ENCODE measurements at regions of chr13 and their contacts with region 1.

Region 1: DNA sequence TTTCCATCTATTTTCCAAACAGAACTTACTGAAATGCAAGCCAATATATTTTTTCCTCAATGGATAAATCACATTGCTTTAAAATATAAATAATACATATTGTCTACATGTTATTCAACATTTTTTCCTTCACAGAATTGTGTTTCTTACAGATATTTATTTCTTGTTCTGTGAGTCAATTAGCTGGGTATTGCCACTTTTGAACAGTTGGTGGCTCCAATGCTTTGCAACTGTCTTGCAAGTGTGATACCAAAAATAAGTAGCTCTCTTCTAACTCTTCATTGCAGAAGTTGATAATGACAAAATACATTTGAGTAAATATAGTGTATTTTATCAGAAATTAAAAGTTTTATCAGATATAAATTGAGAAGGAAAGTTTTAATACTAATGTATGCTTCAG is 17.1 kb upstream of the GPC5 start:
- DNase-seq: peak in 3 of 10 donors; percentile 4 to 30 (median 30)
- H3K4me3 ChIP-seq: no peak overlapping the region
- H3K27ac ChIP-seq: no peak overlapping the region
- H3K27me3 ChIP-seq: peaks cover 0 to 6% (median 0%) of the 10 kb centered on the region in 45 donors
- CTCF ChIP-seq: peak; percentile 20 to 82 (median 58)

Region 2: GRCh38 chr13:91331047-91331915 is 50.1 kb before region 1 on chr13:
- intact Hi-C with region 1: no loop called
- DNase-seq: no peak
- H3K4me3 ChIP-seq: no peak overlapping the region
- H3K27ac ChIP-seq: no peak overlapping the region
- H3K27me3 ChIP-seq: no peaks in the 10 kb centered on the region
- CTCF ChIP-seq: no peak

Region 3: GRCh38 chr13:91722267-91722884 is 341.0 kb after region 1 on chr13:
- intact Hi-C with region 1: loop called (anchors 2 to 10 kb)
- DNase-seq: no peak
- H3K4me3 ChIP-seq: no peak overlapping the region
- H3K27ac ChIP-seq: no peak overlapping the region
- H3K27me3 ChIP-seq: no peaks in the 10 kb centered on the region
- CTCF ChIP-seq: peak; percentile 61 to 91 (median 76)

Measured in dorsolateral prefrontal cortex (tissue), 120 donors.